ENCODE measurements at regions of chr19 and their contacts with region 1.

Region 1: GRCh38 chr19:2475702-2476450 is at the start of gene GADD45B:
- DNase-seq: peak; percentile 99
- H3K4me3 ChIP-seq: peak within 1 kb of the TSS; percentile 97
- H3K27ac ChIP-seq: peak within 1 kb of the TSS; percentile 91
- H3K4me1 ChIP-seq: peaks cover 40% of the 10 kb centered on the region
- CTCF ChIP-seq: no peak
- total RNA-seq, gene GADD45B: 98.4 and 102 TPM in 2 replicates

Region 2: GRCh38 chr19:1400281-1401137 is 1075.4 kb before region 1 on chr19:
- CTCF ChIA-PET with region 1: no interaction called
- POLR2A ChIA-PET with region 1: interaction called, 15 read pairs
- intact Hi-C with region 1: no loop called
- DNase-seq: no peak
- H3K4me3 ChIP-seq: peak overlapping the region; percentile 71
- H3K27ac ChIP-seq: no peak overlapping the region
- H3K4me1 ChIP-seq: peaks cover 9% of the 10 kb centered on the region
- CTCF ChIP-seq: no peak

Region 3: GRCh38 chr19:2491130-2491801 is 15.4 kb after region 1 on chr19:
- CTCF ChIA-PET with region 1: interaction called, 3 read pairs
- POLR2A ChIA-PET with region 1: interaction called, 6 read pairs
- intact Hi-C with region 1: loop called (anchors 1 kb)
- DNase-seq: peak; percentile 72
- H3K4me3 ChIP-seq: peak overlapping the region; percentile 27
- H3K27ac ChIP-seq: peak overlapping the region; percentile 76
- H3K4me1 ChIP-seq: peaks cover 82% of the 10 kb centered on the region
- CTCF ChIP-seq: no peak

Region 4: DNA sequence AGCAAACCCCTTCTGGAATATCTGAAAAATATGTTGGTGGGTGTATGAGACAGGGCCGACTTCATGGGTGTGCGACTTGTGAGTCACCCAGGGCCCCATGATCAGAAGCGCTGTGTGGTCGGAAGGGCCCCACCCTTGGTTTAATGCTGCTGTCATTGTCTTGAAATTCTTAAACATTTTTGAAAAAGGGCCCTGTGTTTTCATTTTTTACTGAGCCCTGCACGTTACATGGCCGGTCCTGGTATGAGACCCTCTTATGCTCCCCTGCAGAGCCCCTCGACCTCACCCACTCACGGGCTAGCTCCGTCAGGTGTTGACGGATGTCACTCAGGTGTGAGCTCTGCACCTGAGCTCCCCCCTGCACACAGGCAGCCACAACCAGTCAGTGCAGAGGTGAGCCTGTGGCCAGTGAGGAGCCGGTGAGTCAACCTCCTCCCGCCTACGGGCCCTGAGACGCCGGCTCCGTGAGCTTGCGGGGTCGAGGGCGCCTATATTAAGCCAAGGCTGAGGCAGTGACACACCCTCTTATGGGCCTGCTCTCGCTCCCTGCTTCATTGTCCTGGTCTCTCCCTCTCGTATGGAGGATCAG is 27.7 kb after region 1 on chr19:
- CTCF ChIA-PET with region 1: no interaction called
- POLR2A ChIA-PET with region 1: no interaction called
- intact Hi-C with region 1: no loop called
- DNase-seq: no peak
- H3K4me3 ChIP-seq: no peak overlapping the region
- H3K27ac ChIP-seq: no peak overlapping the region
- H3K4me1 ChIP-seq: peaks cover 17% of the 10 kb centered on the region
- CTCF ChIP-seq: no peak

Region 5: DNA sequence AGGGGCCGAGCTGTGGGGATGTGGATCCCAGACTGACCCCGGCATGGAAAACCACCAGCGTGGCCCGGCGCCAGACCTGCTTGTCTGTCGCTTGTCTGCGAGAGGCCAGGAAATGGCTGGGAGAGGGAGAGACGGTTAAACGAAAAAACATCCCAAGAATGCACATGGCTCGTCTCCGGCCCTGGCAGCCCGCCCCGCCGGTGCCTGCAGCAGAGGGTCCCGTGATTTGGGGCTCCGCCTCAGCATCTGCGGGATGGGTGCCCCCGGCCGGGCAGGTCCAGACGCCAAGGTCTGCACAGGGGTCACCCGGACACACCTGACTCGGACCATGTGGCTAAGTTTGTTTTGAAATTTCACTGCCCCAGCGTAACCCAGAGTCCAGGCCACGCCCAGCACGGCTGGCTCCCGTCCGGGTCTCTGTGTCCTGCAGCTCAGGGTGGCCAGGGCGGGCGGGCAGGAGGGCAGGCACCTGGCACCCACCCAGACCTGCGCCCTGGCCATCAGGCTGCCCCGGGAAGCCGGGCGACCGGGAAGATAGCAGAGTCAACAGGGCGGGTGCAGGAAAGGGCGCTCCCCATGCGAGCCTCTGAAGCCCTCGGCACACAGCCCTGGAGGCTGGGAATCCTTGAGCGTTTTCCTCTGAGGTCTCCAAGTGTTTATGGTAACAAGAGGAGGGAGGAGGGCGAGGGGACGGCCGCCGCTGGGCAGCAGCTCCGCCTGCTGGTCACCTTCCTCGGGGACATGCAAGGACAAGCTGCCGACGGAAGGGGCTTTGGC is 103.2 kb after region 1 on chr19:
- CTCF ChIA-PET with region 1: no interaction called
- POLR2A ChIA-PET with region 1: interaction called, 3 read pairs
- intact Hi-C with region 1: loop called (anchors 1 kb)
- DNase-seq: no peak
- H3K4me3 ChIP-seq: no peak overlapping the region
- H3K27ac ChIP-seq: no peak overlapping the region
- H3K4me1 ChIP-seq: no peaks in the 10 kb centered on the region
- CTCF ChIP-seq: peak; percentile 58

Region 6: DNA sequence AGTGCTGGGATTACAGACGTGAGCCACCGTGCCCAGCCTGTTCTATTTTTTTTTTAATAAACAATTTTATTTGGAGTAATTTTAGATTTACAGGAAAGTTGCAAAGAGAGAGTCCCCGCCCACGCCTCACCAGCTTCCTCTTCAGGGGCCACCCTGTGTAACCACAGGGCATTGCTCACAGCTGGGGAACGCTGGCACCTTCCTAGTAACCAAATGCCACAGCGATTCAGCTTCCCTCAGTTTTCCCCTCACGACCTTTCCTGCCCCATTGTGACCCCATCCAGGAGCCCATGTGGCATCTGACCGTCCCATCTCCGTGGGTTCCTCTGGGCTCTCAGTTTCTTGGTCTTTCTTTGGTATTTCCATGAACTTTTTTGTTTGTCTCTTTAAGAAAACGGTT is 142.7 kb after region 1 on chr19:
- CTCF ChIA-PET with region 1: interaction called, 3 read pairs
- POLR2A ChIA-PET with region 1: interaction called, 72 read pairs
- intact Hi-C with region 1: no loop called
- DNase-seq: peak; percentile 71
- H3K4me3 ChIP-seq: peak overlapping the region; percentile 42
- H3K27ac ChIP-seq: peak overlapping the region; percentile 67
- H3K4me1 ChIP-seq: peaks cover 88% of the 10 kb centered on the region
- CTCF ChIP-seq: no peak

Region 7: DNA sequence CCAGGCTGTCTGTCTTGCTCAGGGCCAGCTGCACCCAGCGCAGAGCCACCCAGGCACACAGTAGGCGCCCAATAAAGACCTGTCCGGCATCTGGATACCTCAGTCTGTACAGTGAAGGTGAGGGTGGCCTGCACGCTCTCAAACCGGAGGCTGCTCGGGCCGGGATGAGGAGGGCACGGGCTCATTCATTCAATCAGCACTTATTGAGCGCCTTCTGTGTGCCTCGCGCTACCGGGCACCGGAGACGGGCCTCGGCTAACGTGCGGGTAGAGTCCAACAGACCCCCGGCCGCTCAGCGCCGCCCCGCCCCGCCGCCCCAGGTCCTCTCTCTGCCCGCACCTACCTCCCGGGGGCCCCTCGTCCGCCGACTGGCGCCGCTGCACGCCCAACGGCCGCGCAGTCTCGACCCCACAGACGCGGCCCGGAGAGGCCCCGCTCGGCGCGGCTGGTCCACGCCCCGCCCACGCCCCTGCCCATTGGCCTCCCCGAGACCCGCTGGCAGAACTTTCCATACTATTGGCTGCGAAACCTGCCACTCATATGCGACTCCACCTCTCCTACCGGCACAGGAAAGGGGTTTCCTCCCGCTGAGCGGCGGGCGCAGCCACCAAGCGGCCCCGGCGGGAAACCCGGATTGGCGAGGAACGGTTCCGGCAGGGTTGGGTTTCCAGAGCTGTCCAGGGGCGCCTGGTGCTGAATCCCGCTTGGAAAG is 263.9 kb after region 1 on chr19 and contains the start of gene SLC39A3:
- CTCF ChIA-PET with region 1: no interaction called
- POLR2A ChIA-PET with region 1: no interaction called
- intact Hi-C with region 1: loop called (anchors 10 kb)
- DNase-seq: peak; percentile 99
- H3K4me3 ChIP-seq: peak within 1 kb of the TSS; percentile 93
- H3K27ac ChIP-seq: peak within 1 kb of the TSS; percentile 37
- H3K4me1 ChIP-seq: peaks cover 9% of the 10 kb centered on the region
- CTCF ChIP-seq: no peak
- total RNA-seq, gene SLC39A3: 33.3 and 45.6 TPM in 2 replicates

Measured in OCI-LY7 (cell line).